Activated T-helper 1 cell treated with anti-CD3 and anti-CD28 coated beads, Interleukin-12 subunit alpha, Interleukin-12 subunit beta, Interleukin-2, Interleukin-4 antibody, amounts not matched to agents 30 ng/mL and 10 ng/mL and 1 ng/mL, durations not matched to agents 14 hours and 24 hours and 36 hours (primary cell): ENCODE measurements at regions of chr11 and their contacts with region 1.

Region 1: DNA sequence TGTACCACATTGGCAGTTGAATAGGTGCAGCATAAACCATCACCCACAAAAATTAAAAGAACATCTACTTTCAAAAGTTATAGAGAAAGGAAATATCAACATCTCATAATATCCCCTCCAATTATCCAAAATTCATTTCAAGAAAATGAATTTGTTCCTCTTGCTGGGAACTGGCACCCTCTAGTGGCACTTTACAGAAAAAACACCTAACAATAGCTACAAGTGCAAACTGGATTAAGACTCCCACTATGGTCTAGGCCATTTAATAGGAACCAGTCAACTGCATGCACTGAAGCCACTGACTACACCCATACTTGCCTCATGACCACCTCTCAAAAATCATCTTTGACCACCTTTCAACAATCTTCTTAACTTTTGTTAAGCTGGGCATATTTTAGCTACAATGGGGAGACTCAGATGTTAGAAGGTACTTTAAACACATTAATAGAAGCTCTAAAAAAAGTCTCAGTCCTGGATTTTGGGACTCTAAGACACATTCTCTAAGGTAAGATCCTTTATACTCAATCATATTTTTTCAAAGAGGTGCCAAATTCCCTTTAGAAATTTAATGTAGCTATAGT is 17.3 kb downstream of the TRAF6 start:
- DNase-seq: no peak
- H3K4me3 Mint-ChIP-seq: no peak overlapping the region
- H3K27ac Mint-ChIP-seq: no peak overlapping the region
- H3K4me1 Mint-ChIP-seq: peaks cover 18% of the 10 kb centered on the region
- H3K27me3 Mint-ChIP-seq: no peaks in the 10 kb centered on the region

Region 2: DNA sequence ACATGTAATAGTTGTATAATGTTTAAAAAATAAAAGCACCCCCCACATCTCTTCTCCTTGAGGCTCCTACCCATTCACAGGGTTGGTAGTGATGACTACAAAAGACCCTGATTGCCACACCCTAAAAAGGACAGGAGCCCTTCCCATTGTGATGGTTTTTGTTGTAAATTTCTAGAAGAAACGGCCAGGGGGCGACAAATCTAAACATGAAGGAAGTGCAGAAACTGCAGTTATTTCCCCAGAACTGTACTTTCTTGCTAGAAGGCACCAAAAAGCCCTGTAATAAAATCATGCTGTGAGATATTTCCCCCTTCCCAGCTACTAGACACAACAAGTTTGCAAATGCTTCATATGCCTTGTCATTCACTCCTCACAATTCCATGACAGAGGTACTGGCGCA is 185.9 kb before region 1 on chr11:
- intact Hi-C with region 1: loop called (anchors 1 kb)
- DNase-seq: no peak
- H3K4me3 Mint-ChIP-seq: no peak overlapping the region
- H3K27ac Mint-ChIP-seq: no peak overlapping the region
- H3K4me1 Mint-ChIP-seq: peaks cover 9% of the 10 kb centered on the region
- H3K27me3 Mint-ChIP-seq: peaks cover 6% of the 10 kb centered on the region

Region 3: DNA sequence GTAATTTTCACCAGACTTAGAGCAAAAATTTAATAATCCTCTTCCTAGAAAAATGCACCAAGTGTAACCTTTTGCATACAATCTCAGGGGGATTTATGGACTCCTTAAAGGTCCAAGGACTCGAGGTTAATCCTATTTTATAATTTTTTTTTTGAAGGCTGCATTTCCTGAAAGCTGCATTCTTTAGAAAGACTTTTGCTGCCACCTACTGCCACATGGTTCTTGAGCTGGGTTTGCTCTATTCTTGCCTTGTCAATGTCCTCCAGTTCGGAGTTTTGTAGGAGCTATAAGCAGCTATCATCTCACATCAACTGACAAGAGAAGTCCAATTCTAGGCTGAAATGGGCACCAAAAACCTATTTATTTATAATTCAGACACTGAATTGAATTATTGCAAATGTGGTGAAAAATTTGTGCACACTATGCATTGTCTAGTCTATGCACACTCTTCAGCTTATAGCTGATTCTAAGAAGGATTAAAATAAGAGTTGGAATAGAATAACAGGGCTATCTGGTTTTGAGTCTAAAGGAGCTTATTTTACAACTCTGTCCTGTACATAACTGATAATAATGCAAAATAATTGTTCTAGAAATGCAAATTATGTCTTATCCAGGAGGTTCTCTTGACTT is 14.0 kb before region 1 on chr11:
- intact Hi-C with region 1: loop called (anchors 2 kb)
- DNase-seq: peak; percentile 14
- H3K4me3 Mint-ChIP-seq: no peak overlapping the region
- H3K27ac Mint-ChIP-seq: no peak overlapping the region
- H3K4me1 Mint-ChIP-seq: peaks cover 11% of the 10 kb centered on the region
- H3K27me3 Mint-ChIP-seq: no peaks in the 10 kb centered on the region